Heart left ventricle (tissue), 16 donors: ENCODE measurements at regions of chr18 and their contacts with region 1.

Region 1: DNA sequence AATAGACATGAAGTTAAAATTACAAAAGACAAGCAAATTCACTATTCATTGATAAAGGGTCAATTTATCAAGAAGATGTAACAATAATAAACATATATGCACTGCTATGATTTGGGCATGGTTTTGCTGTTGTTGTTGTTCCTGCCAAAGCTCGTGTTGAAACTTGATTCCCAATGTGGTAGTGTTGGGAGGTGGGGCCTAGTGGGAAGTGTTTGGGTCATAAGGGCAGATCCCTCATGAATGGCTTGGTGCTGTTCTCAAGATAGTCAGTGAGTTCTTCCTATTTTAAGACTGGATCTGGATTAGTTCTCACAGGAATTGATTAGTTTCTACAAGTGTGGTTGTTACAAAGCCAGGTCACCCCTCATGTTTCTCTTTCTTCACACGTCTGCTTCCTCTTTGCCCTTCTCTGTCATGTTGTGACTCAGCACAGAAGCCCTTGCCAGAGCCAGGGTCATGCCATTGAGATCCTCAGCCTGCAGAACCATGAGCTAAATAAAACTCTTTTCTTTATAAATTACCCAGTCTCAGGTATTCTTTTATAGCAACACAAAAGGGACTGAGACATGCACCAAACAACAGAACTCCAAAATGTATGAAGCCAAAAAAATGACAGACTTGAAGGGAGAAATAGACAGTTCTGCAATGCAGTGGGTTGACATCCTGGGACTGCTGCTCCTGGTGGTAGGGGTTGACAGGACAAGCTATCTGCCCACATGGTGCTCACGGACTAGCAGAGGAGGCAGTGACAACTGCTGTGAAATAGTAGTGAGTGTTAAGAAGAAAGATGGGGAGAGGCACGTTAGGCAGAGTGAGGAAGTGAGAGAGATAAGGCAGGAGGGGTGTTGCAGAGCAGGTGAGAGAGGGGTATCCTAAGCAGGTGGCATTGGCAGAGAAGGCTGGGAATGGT is 18.6 kb upstream of the SKA1 start:
- DNase-seq: no peak
- ATAC-seq: peak in 3 of 4 donors; percentile 20 to 61 (median 49)
- H3K4me3 ChIP-seq: no peak overlapping the region
- H3K27ac ChIP-seq: peak overlapping the region in 1 of 12 donors; percentile 18
- H3K4me1 ChIP-seq: peaks cover 0 to 8% (median 0%) of the 10 kb centered on the region in 12 donors
- H3K27me3 ChIP-seq: peaks cover 0 to 13% (median 0%) of the 10 kb centered on the region in 9 donors
- CTCF ChIP-seq: peak in 1 of 12 donors; percentile 11
- POLR2A ChIP-seq: no peak

Region 2: DNA sequence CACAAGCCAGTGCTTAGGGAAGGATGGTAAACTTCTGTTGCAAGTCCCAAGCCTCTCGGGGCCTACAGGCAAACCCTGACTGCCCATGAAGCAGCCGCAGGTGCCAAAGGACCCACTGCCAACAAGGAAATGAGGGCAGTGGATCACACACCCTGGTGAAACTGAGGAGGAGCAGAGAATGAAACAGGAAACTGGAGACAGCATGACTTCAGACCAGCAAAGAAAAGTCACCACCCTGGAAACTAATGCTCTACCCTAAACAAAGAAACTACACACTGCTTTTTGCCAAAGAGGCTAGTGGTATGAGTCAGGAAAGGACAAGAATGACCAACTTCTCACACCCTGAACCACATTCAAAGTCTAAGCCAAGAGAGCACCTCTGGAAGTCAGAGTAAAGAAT is 258.6 kb before region 1 on chr18:
- intact Hi-C with region 1: no loop called
- DNase-seq: no peak
- ATAC-seq: peak in 1 of 4 donors; percentile 22
- H3K4me3 ChIP-seq: no peak overlapping the region
- H3K27ac ChIP-seq: no peak overlapping the region
- H3K4me1 ChIP-seq: peaks cover 0 to 3% (median 0%) of the 10 kb centered on the region in 12 donors
- H3K27me3 ChIP-seq: no peaks in the 10 kb centered on the region
- CTCF ChIP-seq: no peak
- POLR2A ChIP-seq: no peak

Region 3: DNA sequence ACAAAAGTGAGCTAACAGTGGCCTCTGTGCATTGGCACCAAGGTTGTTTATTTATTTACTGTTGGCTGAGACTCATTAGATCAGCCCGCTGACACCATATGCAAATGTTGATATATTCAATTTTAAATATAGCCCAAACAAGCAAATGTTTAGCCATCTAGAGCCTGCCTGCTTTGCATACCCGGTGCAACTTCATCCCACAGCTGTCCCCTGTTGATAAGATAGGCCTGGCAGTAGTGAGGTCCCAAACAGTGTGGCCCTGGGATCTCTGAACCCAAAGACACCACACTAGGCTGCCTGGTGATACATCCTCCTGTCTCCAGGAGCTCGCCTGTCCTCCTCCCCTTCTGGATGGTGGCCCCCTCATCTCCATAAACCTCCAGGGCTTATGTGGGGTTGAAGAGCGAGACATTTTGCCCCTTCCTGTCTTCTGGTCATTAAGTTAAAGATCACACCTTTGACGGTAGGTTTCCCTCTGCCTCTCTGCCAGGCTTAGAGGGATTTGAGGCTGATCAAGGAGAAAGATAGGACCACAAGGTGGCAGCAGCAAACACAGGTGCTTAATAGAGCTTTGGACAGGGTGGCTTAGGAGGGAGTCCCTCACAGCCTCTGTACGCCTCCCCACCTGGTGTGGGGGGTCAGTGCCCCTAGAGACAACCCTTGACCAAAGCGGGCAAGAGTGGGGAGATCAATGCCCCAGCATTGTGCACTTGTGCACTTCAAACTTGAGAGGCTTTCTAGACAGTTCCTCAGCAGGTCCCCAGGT is 137.7 kb before region 1 on chr18:
- intact Hi-C with region 1: loop called in 9 of 10 experiments (anchors 5 to 10 kb)
- DNase-seq: no peak
- ATAC-seq: peak in 2 of 4 donors; percentile 34 to 46
- H3K4me3 ChIP-seq: no peak overlapping the region
- H3K27ac ChIP-seq: no peak overlapping the region
- H3K4me1 ChIP-seq: peaks cover 0 to 5% (median 0%) of the 10 kb centered on the region in 12 donors
- H3K27me3 ChIP-seq: peaks cover 0 to 5% (median 0%) of the 10 kb centered on the region in 9 donors
- CTCF ChIP-seq: peak in 9 of 12 donors; percentile 10 to 45 (median 30)
- POLR2A ChIP-seq: no peak

Region 4: GRCh38 chr18:50297621-50298442 is 58.5 kb before region 1 on chr18:
- intact Hi-C with region 1: loop called in 1 of 10 experiments (anchors 5 kb)
- DNase-seq: peak; percentile 77 to 89 (median 84)
- ATAC-seq: peak; percentile 58 to 98 (median 96)
- H3K4me3 ChIP-seq: peak overlapping the region; percentile 8 to 67 (median 48)
- H3K27ac ChIP-seq: no peak overlapping the region
- H3K4me1 ChIP-seq: peaks cover 0 to 14% (median 5%) of the 10 kb centered on the region in 12 donors
- H3K27me3 ChIP-seq: peaks cover 3 to 42% (median 8%) of the 10 kb centered on the region in 9 donors
- CTCF ChIP-seq: no peak
- POLR2A ChIP-seq: no peak

Region 5: DNA sequence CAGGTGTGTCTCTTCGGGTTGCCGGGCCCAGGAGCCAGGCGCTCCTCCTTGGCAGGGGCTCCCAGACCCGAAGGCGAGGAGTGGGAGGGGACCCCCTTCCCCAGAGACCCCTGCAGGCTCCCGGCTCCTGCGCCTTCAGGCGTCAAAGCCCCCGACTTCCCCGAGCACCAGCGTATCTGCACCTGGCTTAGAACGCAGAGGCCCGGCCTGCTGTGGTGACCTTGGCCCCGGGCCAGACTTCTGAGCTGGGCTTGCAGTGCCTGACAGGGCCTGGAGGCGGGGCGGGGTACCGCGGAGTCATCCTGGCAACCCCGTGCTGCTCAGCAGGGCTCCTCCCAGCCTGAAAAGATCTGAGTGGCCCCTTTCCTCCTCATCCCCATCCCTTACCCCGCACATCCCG is 45.6 kb after region 1 on chr18:
- intact Hi-C with region 1: no loop called
- DNase-seq: peak; percentile 36 to 72 (median 63)
- ATAC-seq: peak in 3 of 4 donors; percentile 68 to 81 (median 77)
- H3K4me3 ChIP-seq: no peak overlapping the region
- H3K27ac ChIP-seq: no peak overlapping the region
- H3K4me1 ChIP-seq: peaks cover 0 to 5% (median 0%) of the 10 kb centered on the region in 12 donors
- H3K27me3 ChIP-seq: peaks cover 0 to 35% (median 7%) of the 10 kb centered on the region in 9 donors
- CTCF ChIP-seq: no peak
- POLR2A ChIP-seq: no peak